HepG2 (cell line): ENCODE measurements at regions of chr16 and their contacts with region 1.

Region 1: DNA sequence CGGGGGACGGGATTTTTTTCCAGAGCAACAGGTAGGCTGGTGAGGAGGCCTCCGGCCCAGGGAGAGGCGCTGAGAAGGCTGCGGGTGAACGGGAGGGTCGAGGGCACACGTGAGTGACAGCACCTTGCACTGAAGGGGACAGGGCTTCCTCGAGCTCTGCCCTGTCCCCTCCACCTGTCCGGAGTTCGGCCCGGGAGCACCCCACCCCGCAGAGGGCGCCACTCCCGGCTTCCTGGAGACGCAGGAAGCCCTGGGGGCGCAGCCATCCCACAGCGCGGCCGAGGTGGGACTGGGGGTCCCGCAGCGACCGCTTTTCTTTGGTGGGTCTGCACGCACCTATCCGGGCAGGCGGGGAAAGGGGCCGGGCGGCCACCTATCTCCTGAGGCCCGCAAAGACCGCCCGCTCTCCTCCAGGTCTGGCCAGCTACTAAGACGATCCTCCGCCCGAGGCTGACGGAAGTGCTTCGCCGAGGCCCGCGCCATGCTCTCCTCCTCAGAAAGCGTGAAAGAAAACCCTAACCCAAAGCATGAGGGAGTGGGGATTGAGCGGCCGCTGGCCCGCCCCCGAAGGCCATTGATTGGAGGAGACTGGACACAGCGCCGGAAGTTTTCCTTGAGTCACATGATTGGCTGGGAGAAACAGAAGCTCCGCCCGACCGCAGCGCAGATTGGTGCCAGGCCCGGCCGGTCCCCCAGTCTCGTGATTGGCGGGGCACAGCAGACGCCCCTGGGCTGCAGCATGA is 34.3 kb downstream of the DDX19A start:
- DNase-seq: peak; percentile 98
- ATAC-seq: peak; percentile 91
- H3K4me3 ChIP-seq: peak overlapping the region; percentile 80 to 94 (median 85)
- H3K27ac ChIP-seq: peak overlapping the region; percentile 78
- H3K4me1 ChIP-seq: peaks cover 24% of the 10 kb centered on the region
- H3K27me3 ChIP-seq: no peaks in the 10 kb centered on the region; a peak in 1 of 5 replicates
- CTCF ChIP-seq: peak; percentile 73
- EP300 ChIP-seq: 0 out of 4 replicates have a peak, but pooled peaks of 1 of the 2 experiments have one; percentile 4
- POLR2A ChIP-seq: peak; percentile 92 to 95
- RAD21 ChIP-seq: peak; percentile 84

Region 2: DNA sequence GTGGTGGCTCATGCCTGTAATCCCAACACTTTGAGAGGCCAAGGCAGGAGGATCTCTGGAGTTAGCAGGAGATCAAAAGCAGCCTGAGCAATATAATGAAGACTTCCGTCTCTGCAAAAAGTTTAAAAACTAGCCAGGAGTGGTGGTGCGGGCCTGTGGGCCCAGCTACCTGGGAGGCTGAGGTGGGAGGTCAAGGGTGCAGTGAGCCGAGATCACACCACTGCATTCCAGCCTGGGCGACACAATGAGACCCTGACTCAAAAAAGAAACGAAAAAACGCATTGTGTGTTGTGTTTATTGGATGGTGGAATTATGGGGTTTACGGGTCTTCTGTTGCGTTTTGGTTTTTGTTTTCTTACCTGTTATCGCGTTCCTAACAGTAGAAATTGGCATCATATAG is 35.2 kb before region 1 on chr16:
- CTCF ChIA-PET with region 1: no interaction called
- POLR2A ChIA-PET with region 1: interaction called, 44 read pairs
- in situ Hi-C with region 1: no loop called
- intact Hi-C with region 1: no loop called
- DNase-seq: no peak
- ATAC-seq: no peak
- H3K4me3 ChIP-seq: peak overlapping the region; percentile 89 to 99 (median 90)
- H3K27ac ChIP-seq: peak overlapping the region; percentile 84
- H3K4me1 ChIP-seq: peaks cover 38% of the 10 kb centered on the region
- H3K27me3 ChIP-seq: no peaks in the 10 kb centered on the region; a peak in 1 of 5 replicates
- CTCF ChIP-seq: no peak
- EP300 ChIP-seq: no peak
- POLR2A ChIP-seq: 0 out of 4 replicates have a peak, but pooled peaks of 1 of the 2 experiments have one; percentile 16
- RAD21 ChIP-seq: no peak

Region 3: DNA sequence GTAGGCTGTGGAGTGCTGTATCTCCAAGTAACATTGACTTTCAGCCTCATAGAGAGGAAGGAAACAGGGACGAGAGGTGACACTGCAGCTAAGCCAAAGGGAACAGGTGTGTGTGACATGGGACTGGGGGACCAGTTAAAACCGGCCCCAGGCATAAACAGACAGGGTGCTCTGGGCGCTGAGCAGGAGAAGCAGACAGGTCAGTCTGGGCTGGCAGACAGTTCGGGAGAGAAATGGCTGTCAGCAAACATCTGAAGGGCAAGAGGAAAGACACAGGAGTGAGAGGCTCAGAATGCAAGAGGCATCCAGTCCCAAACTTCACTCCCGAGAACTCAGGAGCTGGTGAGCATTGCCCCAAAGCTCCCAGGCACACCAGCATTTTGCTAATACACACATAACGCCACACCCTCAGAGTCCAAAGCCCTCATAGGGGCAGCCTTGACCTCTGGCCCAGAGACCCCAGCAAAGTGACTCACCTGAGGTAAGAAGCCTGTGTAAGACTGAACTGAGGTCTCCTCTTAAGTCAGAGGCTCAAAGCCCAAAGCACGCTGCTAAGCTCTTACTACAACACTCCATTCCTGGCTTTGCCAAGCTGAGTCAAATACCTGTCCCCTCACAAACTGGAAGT is 41.4 kb after region 1 on chr16:
- CTCF ChIA-PET with region 1: no interaction called
- POLR2A ChIA-PET with region 1: interaction called, 47 read pairs
- in situ Hi-C with region 1: no loop called
- intact Hi-C with region 1: no loop called
- DNase-seq: no peak
- ATAC-seq: peak; percentile 10; the same call in 1 of the 3 replicates
- H3K4me3 ChIP-seq: 0 out of 6 replicates have a peak overlapping the region, but pooled peaks of 1 of the 3 experiments have one; percentile 9
- H3K27ac ChIP-seq: peak overlapping the region; percentile 57
- H3K4me1 ChIP-seq: peaks cover 90% of the 10 kb centered on the region
- H3K27me3 ChIP-seq: no peaks in the 10 kb centered on the region
- CTCF ChIP-seq: no peak
- EP300 ChIP-seq: no peak
- POLR2A ChIP-seq: no peak
- RAD21 ChIP-seq: no peak

Region 4: GRCh38 chr16:70448075-70448474 is 67.0 kb after region 1 on chr16:
- CTCF ChIA-PET with region 1: no interaction called
- POLR2A ChIA-PET with region 1: interaction called, 96 read pairs
- in situ Hi-C with region 1: no loop called
- intact Hi-C with region 1: loop called (anchors 5 kb)
- DNase-seq: no peak
- ATAC-seq: no peak
- H3K4me3 ChIP-seq: no peak overlapping the region
- H3K27ac ChIP-seq: no peak overlapping the region
- H3K4me1 ChIP-seq: peaks cover 43% of the 10 kb centered on the region
- H3K27me3 ChIP-seq: no peaks in the 10 kb centered on the region
- CTCF ChIP-seq: no peak
- EP300 ChIP-seq: no peak
- POLR2A ChIP-seq: no peak
- RAD21 ChIP-seq: no peak

Region 5: GRCh38 chr16:70478912-70479341 is 97.9 kb after region 1 on chr16:
- CTCF ChIA-PET with region 1: no interaction called
- POLR2A ChIA-PET with region 1: interaction called, 28 read pairs
- in situ Hi-C with region 1: no loop called
- intact Hi-C with region 1: no loop called
- DNase-seq: no peak
- ATAC-seq: no peak
- H3K4me3 ChIP-seq: no peak overlapping the region
- H3K27ac ChIP-seq: no peak overlapping the region
- H3K4me1 ChIP-seq: peaks cover 12% of the 10 kb centered on the region
- H3K27me3 ChIP-seq: no peaks in the 10 kb centered on the region
- CTCF ChIP-seq: no peak
- EP300 ChIP-seq: no peak
- POLR2A ChIP-seq: no peak
- RAD21 ChIP-seq: no peak

Region 6: GRCh38 chr16:70725912-70726828 is 345.1 kb after region 1 on chr16:
- CTCF ChIA-PET with region 1: no interaction called
- POLR2A ChIA-PET with region 1: interaction called, 10 read pairs
- in situ Hi-C with region 1: no loop called
- intact Hi-C with region 1: no loop called
- DNase-seq: no peak
- ATAC-seq: no peak
- H3K4me3 ChIP-seq: peak overlapping the region; percentile 27 to 73 (median 52); a peak in 5 of 6 replicates
- H3K27ac ChIP-seq: peak overlapping the region; percentile 99
- H3K4me1 ChIP-seq: peaks cover 45% of the 10 kb centered on the region
- H3K27me3 ChIP-seq: no peaks in the 10 kb centered on the region
- CTCF ChIP-seq: no peak
- EP300 ChIP-seq: no peak
- POLR2A ChIP-seq: 0 out of 4 replicates have a peak, but pooled peaks of 1 of the 2 experiments have one; percentile 5
- RAD21 ChIP-seq: no peak